CD8-positive, alpha-beta T cell (primary cell): ENCODE measurements at regions of chr5 and their contacts with region 1.

Region 1: DNA sequence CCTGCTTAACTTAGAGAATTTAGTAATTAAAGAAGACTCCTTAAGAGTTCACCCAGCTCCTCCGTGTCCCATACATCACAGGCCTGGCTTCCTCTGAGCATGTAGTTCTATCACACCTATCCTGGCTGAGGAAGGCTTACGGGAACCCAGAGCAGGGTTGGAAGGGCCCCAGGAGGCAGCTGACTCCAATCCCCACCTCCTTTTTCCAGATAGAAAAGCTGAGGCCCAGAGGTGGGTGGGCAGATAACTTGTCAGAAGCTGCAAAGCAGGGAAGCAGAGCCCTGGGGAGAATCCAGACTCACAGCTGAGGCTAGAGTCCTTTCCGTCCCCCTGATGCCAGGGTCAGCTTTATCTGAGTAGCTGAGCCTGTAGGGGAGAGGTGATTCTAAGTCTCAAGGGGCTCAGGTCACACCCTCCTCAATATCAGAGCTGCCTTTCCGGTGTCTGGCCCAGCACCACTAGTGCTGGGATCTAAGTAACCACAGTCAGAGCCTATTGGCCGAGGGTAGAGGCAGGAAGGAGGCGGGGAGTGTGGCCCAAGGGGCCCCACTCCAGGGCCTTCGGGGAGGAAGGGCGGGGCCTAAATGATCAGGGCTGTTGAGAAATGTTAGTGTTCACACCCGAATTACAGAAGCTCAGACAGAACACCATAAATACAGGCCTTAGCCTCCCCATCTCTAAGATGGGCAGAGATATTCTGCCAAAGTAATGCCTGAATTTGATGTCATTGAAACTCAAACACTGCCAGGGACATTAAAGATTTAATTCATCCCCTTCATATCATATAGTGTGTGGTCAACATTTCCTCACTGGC is 9.9 kb downstream of the CCDC69 start:
- DNase-seq: peak; percentile 67 to 95 (median 89)
- ATAC-seq: peak; percentile 80
- H3K4me3 ChIP-seq: peak overlapping the region; percentile 57 to 61
- H3K4me3 Mint-ChIP-seq: peak overlapping the region; percentile 83
- H3K27ac ChIP-seq: peak overlapping the region; percentile 70 to 86
- H3K27ac Mint-ChIP-seq: peak overlapping the region; percentile 96
- H3K4me1 ChIP-seq: peaks cover 91% of the 10 kb centered on the region
- H3K4me1 Mint-ChIP-seq: peaks cover 86% of the 10 kb centered on the region
- H3K27me3 ChIP-seq: no peaks in the 10 kb centered on the region
- H3K27me3 Mint-ChIP-seq: no peaks in the 10 kb centered on the region
- CTCF ChIP-seq: no peak

Region 2: GRCh38 chr5:150879358-150879757 is 334.6 kb before region 1 on chr5:
- CTCF ChIA-PET with region 1: no interaction called
- POLR2A ChIA-PET with region 1: no interaction called
- intact Hi-C with region 1: no loop called
- DNase-seq: no peak
- ATAC-seq: no peak
- H3K4me3 ChIP-seq: no peak overlapping the region
- H3K4me3 Mint-ChIP-seq: no peak overlapping the region
- H3K27ac ChIP-seq: no peak overlapping the region
- H3K27ac Mint-ChIP-seq: no peak overlapping the region
- H3K4me1 ChIP-seq: no peaks in the 10 kb centered on the region
- H3K4me1 Mint-ChIP-seq: no peaks in the 10 kb centered on the region
- H3K27me3 ChIP-seq: no peaks in the 10 kb centered on the region
- H3K27me3 Mint-ChIP-seq: no peaks in the 10 kb centered on the region
- CTCF ChIP-seq: no peak

Region 3: DNA sequence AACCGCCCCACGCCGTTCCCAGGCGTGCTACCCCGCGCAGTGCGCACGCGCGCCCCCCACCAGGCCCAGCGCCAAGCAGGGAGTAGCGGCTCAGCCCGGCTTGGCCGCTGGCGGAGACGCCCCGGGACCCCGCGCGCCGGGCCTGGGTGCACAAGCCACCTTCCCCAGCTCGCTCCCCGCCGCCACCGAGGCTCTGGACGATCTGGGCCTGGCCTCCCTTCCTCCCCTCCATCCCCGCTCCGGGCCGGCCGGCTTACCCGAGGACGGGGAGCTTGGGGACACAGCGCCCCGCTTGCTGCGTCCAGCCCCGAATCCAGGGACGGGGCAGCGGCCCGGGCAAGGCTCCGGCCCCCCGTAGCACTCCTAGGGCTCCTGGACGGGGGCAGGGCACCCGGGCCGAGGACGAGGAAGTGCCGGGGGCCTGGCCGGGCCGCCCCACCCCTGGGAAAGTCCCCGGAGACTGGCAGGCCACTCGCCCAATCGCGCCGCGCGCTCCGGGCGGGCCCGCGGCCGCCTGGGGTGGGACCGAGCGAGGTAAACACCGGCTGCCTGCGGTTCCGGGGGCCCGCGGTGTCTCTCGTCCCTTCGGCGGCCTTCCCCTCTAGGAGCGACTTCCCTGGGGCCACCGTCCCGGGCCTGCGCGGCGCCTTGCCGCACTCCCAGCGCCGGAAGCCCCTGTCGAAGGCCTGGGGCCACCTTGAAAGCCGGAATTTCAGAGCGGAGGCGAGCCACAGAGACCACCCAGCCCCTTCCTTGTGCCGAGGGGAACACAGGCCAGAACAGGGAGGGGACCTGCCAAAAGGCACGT is 133.2 kb before region 1 on chr5 and contains the start of gene TNIP1:
- CTCF ChIA-PET with region 1: no interaction called
- POLR2A ChIA-PET with region 1: no interaction called
- intact Hi-C with region 1: loop called (anchors 2 to 5 kb)
- DNase-seq: peak; percentile 87 to 97 (median 94)
- ATAC-seq: peak; percentile 84
- H3K4me3 ChIP-seq: peak within 1 kb of the TSS; percentile 76
- H3K4me3 Mint-ChIP-seq: peak within 1 kb of the TSS; percentile 93
- H3K27ac ChIP-seq: peak within 1 kb of the TSS; percentile 70 to 98
- H3K27ac Mint-ChIP-seq: peak within 1 kb of the TSS; percentile 95
- H3K4me1 ChIP-seq: peaks cover 56% of the 10 kb centered on the region
- H3K4me1 Mint-ChIP-seq: peaks cover 80% of the 10 kb centered on the region
- H3K27me3 ChIP-seq: no peaks in the 10 kb centered on the region
- H3K27me3 Mint-ChIP-seq: no peaks in the 10 kb centered on the region
- CTCF ChIP-seq: no peak
- total RNA-seq, gene TNIP1: 133 to 134 TPM

Region 4: GRCh38 chr5:151150471-151151262 is 63.3 kb before region 1 on chr5:
- CTCF ChIA-PET with region 1: interaction called, 3 read pairs
- POLR2A ChIA-PET with region 1: interaction called, 4 read pairs
- intact Hi-C with region 1: loop called (anchors 2 to 5 kb)
- DNase-seq: peak; percentile 48 to 91 (median 80)
- ATAC-seq: peak; percentile 83
- H3K4me3 ChIP-seq: peak overlapping the region in 1 of 2 experiments; percentile 37
- H3K4me3 Mint-ChIP-seq: peak overlapping the region; percentile 75
- H3K27ac ChIP-seq: peak overlapping the region; percentile 65 to 90
- H3K27ac Mint-ChIP-seq: peak overlapping the region; percentile 95
- H3K4me1 ChIP-seq: peaks cover 99% of the 10 kb centered on the region
- H3K4me1 Mint-ChIP-seq: peaks cover 97% of the 10 kb centered on the region
- H3K27me3 ChIP-seq: no peaks in the 10 kb centered on the region
- H3K27me3 Mint-ChIP-seq: no peaks in the 10 kb centered on the region
- CTCF ChIP-seq: no peak

Region 5: GRCh38 chr5:151191659-151192058 is 22.3 kb before region 1 on chr5:
- CTCF ChIA-PET with region 1: interaction called, 3 read pairs
- POLR2A ChIA-PET with region 1: interaction called, 5 read pairs
- intact Hi-C with region 1: loop called in 1 of 2 experiments (anchors 2 kb)
- DNase-seq: peak in 1 of 9 experiments; percentile 17
- ATAC-seq: no peak
- H3K4me3 ChIP-seq: no peak overlapping the region
- H3K4me3 Mint-ChIP-seq: no peak overlapping the region
- H3K27ac ChIP-seq: no peak overlapping the region
- H3K27ac Mint-ChIP-seq: peak overlapping the region; percentile 45
- H3K4me1 ChIP-seq: peaks cover 24% of the 10 kb centered on the region
- H3K4me1 Mint-ChIP-seq: peaks cover 61% of the 10 kb centered on the region
- H3K27me3 ChIP-seq: no peaks in the 10 kb centered on the region
- H3K27me3 Mint-ChIP-seq: no peaks in the 10 kb centered on the region
- CTCF ChIP-seq: no peak

Region 6: DNA sequence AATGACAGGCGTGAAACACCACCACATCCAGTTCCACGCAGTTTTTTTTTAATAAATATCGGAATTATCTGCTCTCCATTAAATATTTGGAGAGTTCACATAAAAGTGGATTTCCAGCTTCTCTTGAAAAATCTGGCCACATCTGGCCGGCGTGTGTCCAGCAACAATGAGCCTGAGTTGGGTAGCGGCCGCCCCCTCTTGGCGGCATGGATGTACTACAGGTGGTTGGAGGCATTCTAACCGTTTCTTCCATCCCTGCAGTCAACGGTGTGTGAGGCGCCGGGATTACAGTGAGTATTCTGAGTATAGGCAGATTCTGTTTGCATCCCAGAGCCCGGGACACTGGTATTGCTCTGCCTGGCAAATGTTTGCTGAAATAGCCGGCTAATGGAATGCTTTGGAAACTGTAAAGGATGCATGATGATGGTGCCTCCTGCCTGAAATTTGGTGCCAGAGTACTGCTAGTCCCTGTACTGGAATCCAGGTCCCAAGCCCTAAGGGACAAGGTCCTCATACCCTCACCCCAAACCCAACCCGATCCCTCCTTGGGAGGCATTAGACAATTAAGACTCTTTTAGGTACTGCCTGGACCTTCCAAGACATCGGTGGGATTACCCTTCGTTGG is 25.3 kb after region 1 on chr5:
- CTCF ChIA-PET with region 1: interaction called, 13 read pairs
- POLR2A ChIA-PET with region 1: interaction called, 5 read pairs
- intact Hi-C with region 1: loop called in 1 of 2 experiments (anchors 1 kb)
- DNase-seq: peak in 8 of 9 experiments; percentile 38 to 77 (median 63)
- ATAC-seq: peak; percentile 87
- H3K4me3 ChIP-seq: no peak overlapping the region
- H3K4me3 Mint-ChIP-seq: peak overlapping the region; percentile 57
- H3K27ac ChIP-seq: no peak overlapping the region
- H3K27ac Mint-ChIP-seq: no peak overlapping the region
- H3K4me1 ChIP-seq: peaks cover 23% of the 10 kb centered on the region
- H3K4me1 Mint-ChIP-seq: peaks cover 38% of the 10 kb centered on the region
- H3K27me3 ChIP-seq: no peaks in the 10 kb centered on the region
- H3K27me3 Mint-ChIP-seq: no peaks in the 10 kb centered on the region
- CTCF ChIP-seq: peak; percentile 100